Activated T-helper 1 cell treated with anti-CD3 and anti-CD28 coated beads, Interleukin-12 subunit alpha, Interleukin-12 subunit beta, Interleukin-2, Interleukin-4 antibody, amounts not matched to agents 30 ng/mL and 10 ng/mL and 1 ng/mL, durations not matched to agents 14 hours and 24 hours and 36 hours (primary cell): ENCODE measurements at regions of chr14 and their contacts with region 1.

Region 1: DNA sequence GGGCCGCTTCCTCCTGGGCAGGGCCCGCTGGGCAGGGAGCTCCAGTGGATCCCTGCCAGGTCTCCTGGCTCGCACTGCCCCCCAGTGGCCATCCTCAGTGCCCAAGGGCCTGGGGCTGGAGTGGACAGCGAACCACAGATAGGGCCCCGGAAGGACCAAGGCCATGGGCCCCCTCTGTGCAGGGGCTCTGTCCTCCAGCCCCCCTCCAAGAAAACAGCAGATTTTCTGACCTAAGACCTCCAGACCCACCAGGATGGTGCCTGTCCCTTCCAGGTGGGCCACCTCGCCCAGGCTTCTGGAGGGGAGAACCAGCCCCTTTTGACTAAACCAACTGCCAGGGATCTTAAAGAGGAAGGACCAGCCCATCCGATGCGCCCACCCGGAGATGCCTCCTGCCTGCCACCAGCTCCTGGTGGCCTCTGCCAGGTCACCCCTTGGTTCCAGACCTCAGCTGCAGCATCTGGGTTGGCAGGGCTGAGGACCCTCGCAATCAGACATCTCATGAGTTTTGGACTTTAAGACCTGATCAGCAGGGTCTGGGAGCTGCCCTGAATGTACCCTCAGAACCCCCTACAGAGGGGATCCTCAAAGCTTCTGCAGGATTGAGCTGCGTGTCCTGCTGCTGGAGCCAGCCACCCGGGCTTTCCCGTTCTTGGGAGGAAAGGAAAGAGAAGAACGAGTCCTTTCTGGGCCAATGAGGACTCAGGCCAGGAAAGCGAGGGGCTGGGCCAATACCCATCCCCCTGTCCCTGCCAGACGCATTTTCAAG is 325.8 kb upstream of the DIO3 start:
- DNase-seq: no peak
- H3K4me3 Mint-ChIP-seq: no peak overlapping the region
- H3K27ac Mint-ChIP-seq: no peak overlapping the region
- H3K4me1 Mint-ChIP-seq: no peaks in the 10 kb centered on the region
- H3K27me3 Mint-ChIP-seq: no peaks in the 10 kb centered on the region

Region 2: DNA sequence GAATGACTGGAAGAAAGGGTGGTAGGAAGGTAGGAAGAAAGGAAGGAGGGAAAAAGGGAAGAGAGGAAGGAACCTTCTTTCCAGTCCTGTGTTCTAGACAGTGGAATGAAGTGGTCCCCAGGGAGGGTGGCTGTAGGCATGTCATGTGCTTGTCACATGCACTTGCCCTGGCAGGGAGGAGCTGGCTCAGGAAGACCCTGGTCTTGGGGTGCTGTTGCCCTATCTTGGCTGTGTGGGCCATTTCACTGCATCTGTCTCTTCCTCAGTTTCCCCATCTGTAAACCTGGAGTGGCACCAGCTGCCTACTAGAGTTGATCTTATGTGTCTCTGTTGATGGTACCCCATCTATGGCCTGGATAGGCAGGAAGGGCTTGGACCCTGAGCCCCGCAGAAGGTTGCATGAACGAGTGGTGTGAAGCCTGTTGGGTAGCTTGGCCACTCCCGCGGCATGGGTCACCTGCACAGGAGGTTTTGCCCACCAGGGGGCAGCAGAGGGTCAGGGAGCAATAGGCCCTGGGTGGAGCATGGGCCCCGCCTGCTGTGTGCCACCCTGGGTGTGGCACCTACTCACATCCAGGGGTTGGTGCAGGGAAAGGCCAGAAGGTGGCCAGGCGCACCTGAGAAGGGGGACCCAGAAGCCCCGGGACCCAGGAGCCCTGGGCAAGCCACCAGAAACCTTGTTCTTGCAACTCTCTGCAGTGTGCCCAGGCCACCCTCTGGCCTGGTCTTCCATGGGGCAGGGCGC is 384.5 kb before region 1 on chr14:
- intact Hi-C with region 1: loop called (anchors 10 kb)
- DNase-seq: peak; percentile 59
- H3K4me3 Mint-ChIP-seq: no peak overlapping the region
- H3K27ac Mint-ChIP-seq: no peak overlapping the region
- H3K4me1 Mint-ChIP-seq: no peaks in the 10 kb centered on the region
- H3K27me3 Mint-ChIP-seq: no peaks in the 10 kb centered on the region

Region 3: GRCh38 chr14:101098641-101099040 is 136.9 kb before region 1 on chr14:
- intact Hi-C with region 1: no loop called
- DNase-seq: no peak
- H3K4me3 Mint-ChIP-seq: no peak overlapping the region
- H3K27ac Mint-ChIP-seq: no peak overlapping the region
- H3K4me1 Mint-ChIP-seq: no peaks in the 10 kb centered on the region
- H3K27me3 Mint-ChIP-seq: peaks cover 12% of the 10 kb centered on the region

Region 4: DNA sequence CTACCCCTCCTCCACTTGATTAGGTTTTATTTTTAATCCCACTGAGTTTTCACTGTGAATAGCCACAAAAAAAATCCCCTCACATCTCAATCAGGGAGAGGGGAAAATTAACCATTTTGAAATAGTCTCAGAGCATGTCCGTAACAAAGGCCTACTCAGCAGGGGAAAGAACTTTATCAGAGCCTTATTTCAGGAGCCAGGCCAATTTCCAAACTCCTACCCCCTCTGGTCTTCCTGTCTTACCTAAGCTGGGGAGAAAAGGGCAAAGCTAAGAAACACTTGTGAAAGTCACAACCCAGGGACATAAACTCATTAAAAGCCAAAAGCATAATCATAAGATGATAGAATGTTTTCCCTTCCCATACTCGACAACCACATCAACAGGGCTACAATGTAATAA is 65.5 kb after region 1 on chr14:
- intact Hi-C with region 1: no loop called
- DNase-seq: no peak
- H3K4me3 Mint-ChIP-seq: no peak overlapping the region
- H3K27ac Mint-ChIP-seq: no peak overlapping the region
- H3K4me1 Mint-ChIP-seq: no peaks in the 10 kb centered on the region
- H3K27me3 Mint-ChIP-seq: peaks cover 25% of the 10 kb centered on the region

Region 5: DNA sequence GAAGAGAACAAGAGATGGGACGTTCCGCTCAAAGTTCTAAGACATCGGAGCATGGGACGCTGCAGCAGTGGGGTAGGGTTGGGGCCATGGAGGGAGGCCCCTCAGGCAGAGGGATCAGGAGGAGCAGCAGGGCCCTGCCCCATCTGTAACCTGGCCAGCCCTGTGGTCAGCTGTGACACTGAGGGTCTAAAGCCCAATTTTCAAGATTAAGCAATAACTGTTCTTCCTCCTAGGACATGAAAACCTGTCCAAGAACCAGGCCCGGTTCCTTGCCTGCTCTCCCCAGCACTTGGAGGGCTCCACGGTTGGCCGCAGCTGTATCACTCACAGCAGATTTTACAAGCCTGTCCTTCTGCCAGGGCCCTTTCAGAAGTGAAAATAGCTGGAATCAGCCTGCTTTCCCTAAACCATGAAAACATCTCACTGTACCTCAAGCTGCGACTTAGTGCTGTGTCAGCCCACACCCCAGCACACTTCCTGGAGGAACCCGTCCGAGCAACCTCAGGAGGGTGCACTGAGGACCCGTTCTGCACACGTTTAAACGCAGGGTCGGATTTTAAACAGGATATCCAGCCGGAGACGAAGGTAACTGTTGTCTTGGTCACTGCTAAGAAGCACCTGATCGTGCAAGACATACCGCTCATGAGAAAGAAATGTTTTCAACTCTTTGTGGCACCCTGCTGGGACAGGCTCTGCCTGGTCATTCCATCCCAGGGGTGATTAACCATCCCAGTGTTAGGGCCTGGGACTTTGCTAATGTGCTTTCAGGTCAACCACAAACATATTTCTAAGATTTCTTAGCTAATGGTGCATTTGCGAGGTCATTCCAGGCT is 123.9 kb after region 1 on chr14:
- intact Hi-C with region 1: no loop called
- DNase-seq: no peak
- H3K4me3 Mint-ChIP-seq: no peak overlapping the region
- H3K27ac Mint-ChIP-seq: no peak overlapping the region
- H3K4me1 Mint-ChIP-seq: no peaks in the 10 kb centered on the region
- H3K27me3 Mint-ChIP-seq: peaks cover 4% of the 10 kb centered on the region